ENCODE measurements at regions of chr2 and their contacts with region 1.

Region 1: GRCh38 chr2:144659731-144660275 is 139.9 kb upstream of the ZEB2 start:
- DNase-seq: peak; percentile 97 to 100 (median 97)
- H3K4me3 ChIP-seq: no peak overlapping the region
- H3K4me3 Mint-ChIP-seq: peak overlapping the region in 1 of 2 donors; percentile 48
- H3K27ac ChIP-seq: peak overlapping the region; percentile 94 to 100
- H3K27ac Mint-ChIP-seq: peak overlapping the region; percentile 99 to 100 (median 99)
- H3K4me1 ChIP-seq: peaks cover 51 to 68% of the 10 kb centered on the region in 2 donors
- H3K4me1 Mint-ChIP-seq: peaks cover 56% of the 10 kb centered on the region
- H3K27me3 ChIP-seq: no peaks in the 10 kb centered on the region
- H3K27me3 Mint-ChIP-seq: no peaks in the 10 kb centered on the region
- CTCF ChIP-seq: no peak

Region 2: DNA sequence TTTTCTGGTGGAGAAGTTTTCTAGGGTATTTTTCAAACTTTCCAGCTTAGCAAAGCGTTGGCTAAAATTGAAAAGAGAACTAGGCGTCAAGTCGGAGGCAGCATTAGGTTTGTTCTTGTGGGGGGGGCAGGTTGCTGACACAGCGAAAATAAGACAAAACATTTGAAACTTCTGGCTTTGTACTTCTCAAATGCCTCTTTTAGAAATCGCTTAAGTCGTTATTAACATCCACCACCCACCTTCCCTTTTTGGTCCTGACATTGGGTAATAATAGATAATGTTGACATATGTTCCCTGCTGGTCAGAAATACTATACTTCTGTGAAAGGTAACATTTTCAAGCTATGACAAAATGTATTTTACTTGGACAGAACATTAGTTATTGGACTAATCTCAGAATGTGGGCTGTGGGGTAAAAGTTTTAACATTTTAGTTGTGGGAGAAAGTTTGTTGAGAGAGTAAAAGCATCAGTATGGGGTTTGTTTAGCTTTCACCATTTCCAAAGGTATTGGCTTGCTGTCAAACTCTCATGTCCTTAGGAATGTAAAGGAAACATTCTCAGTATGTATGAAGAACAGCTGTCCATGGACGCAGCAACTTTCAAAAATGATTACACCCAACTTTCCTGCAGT is 51.8 kb before region 1 on chr2:
- intact Hi-C with region 1: loop called in 1 of 2 experiments (anchors 10 kb)
- DNase-seq: peak; percentile 80 to 85 (median 84)
- H3K4me3 ChIP-seq: peak overlapping the region in 1 of 3 experiments; percentile 50
- H3K4me3 Mint-ChIP-seq: peak overlapping the region; percentile 28 to 76
- H3K27ac ChIP-seq: peak overlapping the region; percentile 92 to 96
- H3K27ac Mint-ChIP-seq: peak overlapping the region; percentile 94 to 99 (median 97)
- H3K4me1 ChIP-seq: peaks cover 59 to 67% of the 10 kb centered on the region in 2 donors
- H3K4me1 Mint-ChIP-seq: peaks cover 52% of the 10 kb centered on the region
- H3K27me3 ChIP-seq: no peaks in the 10 kb centered on the region
- H3K27me3 Mint-ChIP-seq: no peaks in the 10 kb centered on the region
- CTCF ChIP-seq: no peak

Region 3: GRCh38 chr2:144682248-144682647 is 22.4 kb after region 1 on chr2:
- intact Hi-C with region 1: loop called in 1 of 2 experiments (anchors 2 kb)
- DNase-seq: peak; percentile 52 to 78 (median 53)
- H3K4me3 ChIP-seq: peak overlapping the region in 1 of 3 experiments; percentile 51
- H3K4me3 Mint-ChIP-seq: peak overlapping the region in 1 of 2 donors; percentile 43
- H3K27ac ChIP-seq: peak overlapping the region; percentile 58 to 94
- H3K27ac Mint-ChIP-seq: peak overlapping the region; percentile 94 to 98 (median 97)
- H3K4me1 ChIP-seq: peaks cover 58 to 64% of the 10 kb centered on the region in 2 donors
- H3K4me1 Mint-ChIP-seq: peaks cover 68% of the 10 kb centered on the region
- H3K27me3 ChIP-seq: no peaks in the 10 kb centered on the region
- H3K27me3 Mint-ChIP-seq: no peaks in the 10 kb centered on the region
- CTCF ChIP-seq: no peak

Region 4: GRCh38 chr2:144703852-144704708 is 44.3 kb after region 1 on chr2:
- intact Hi-C with region 1: loop called (anchors 2 kb)
- DNase-seq: peak; percentile 98 to 100 (median 99)
- H3K4me3 ChIP-seq: no peak overlapping the region
- H3K4me3 Mint-ChIP-seq: no peak overlapping the region
- H3K27ac ChIP-seq: peak overlapping the region; percentile 84 to 100
- H3K27ac Mint-ChIP-seq: peak overlapping the region; percentile 96 to 99 (median 99)
- H3K4me1 ChIP-seq: peaks cover 63 to 73% of the 10 kb centered on the region in 2 donors
- H3K4me1 Mint-ChIP-seq: peaks cover 65% of the 10 kb centered on the region
- H3K27me3 ChIP-seq: no peaks in the 10 kb centered on the region
- H3K27me3 Mint-ChIP-seq: no peaks in the 10 kb centered on the region
- CTCF ChIP-seq: no peak

Measured in CD14-positive monocyte (primary cell).